ENCODE measurements at regions of chr6 and their contacts with region 1.

Region 1: DNA sequence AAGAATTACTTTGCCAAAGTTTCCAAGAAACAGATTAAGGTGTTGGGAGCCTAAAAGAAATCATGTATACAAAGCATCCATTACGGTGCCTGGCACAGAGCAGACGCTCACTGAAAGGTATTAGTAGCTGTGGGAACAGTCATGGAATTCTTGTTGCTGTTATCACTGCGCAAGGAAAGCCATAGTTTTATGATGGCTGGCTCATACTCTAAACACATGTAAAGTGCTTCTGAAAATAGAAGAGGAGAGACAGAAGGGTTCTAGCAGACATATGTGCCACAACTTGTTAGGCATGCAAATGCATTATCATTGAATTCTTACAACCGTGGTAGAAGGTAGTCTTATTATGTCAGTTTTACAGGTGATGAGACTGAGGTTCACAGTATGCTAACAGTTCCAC is 112.4 kb downstream of the TENT5A start:
- DNase-seq: no peak
- H3K4me3 ChIP-seq: no peak overlapping the region
- H3K27ac ChIP-seq: no peak overlapping the region
- H3K4me1 ChIP-seq: no peaks in the 10 kb centered on the region
- H3K27me3 ChIP-seq: no peaks in the 10 kb centered on the region
- CTCF ChIP-seq: no peak
- POLR2A ChIP-seq: no peak

Region 2: DNA sequence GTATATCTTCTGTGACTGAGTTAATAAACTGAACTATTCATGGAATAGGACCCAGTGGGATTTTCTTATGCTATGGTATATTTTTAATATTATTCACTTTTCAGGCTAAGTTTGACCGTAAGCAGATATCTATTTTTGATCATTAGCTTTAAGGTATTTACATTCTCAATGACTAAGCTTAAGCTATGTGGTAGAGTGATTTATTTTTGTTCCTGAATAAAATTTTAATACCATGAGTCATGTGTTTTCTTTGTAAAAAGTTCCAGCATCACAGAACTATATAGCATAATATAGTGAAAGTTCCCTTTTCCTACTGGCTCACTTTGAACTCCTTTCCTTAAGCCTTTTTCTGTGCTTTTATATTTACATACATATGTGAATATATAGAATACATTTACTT is 1457.8 kb before region 1 on chr6:
- intact Hi-C with region 1: loop called (anchors 10 kb)
- DNase-seq: no peak
- H3K4me3 ChIP-seq: no peak overlapping the region
- H3K27ac ChIP-seq: no peak overlapping the region
- H3K4me1 ChIP-seq: no peaks in the 10 kb centered on the region
- H3K27me3 ChIP-seq: no peaks in the 10 kb centered on the region
- CTCF ChIP-seq: no peak
- POLR2A ChIP-seq: no peak